T-cell (primary cell): ENCODE measurements at regions of chr7 and their contacts with region 1.

Region 1: DNA sequence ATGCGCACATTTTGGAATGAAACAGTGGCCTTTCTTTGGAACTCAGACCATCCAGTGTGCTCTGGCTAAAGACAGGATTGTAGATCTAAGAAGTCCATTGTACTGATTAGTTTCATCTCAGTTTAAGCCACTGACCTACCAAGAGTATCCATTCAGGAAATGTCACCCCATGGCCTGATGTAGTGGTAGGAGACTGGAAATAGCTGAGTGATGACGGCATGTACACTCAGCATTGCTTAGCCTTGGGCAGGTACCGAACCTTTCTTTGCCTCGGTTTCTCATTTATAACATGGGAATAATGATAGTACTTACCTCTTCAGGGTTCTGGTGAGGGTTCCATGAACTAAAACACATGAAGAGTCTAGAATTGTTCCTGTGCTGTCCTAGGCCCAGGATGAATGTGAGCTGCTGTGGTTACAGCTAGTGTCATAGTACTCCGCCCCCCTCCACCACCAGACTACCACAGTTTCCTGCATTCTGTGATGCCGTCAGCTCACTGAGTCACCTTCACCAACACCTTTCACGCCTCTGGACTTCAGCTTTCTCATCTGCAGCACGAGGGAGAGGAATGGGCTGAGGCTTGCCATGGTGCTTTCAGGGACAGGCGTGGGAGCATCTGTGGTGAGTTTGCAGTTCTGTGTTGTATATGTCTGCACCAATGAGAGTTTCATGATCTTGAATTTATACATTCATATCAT is 484.0 kb upstream of the GALNT17 start:
- DNase-seq: peak; percentile 47 to 90 (median 75)
- ATAC-seq: peak; percentile 96 to 98 (median 98)
- H3K4me3 ChIP-seq: peak overlapping the region in 1 of 2 donors; percentile 6
- H3K4me3 Mint-ChIP-seq: peak overlapping the region; percentile 35 to 69 (median 56)
- H3K27ac ChIP-seq: peak overlapping the region; percentile 67
- H3K27ac Mint-ChIP-seq: peak overlapping the region; percentile 77 to 88
- H3K4me1 ChIP-seq: peaks cover 13 to 48% of the 10 kb centered on the region in 2 experiments
- H3K4me1 Mint-ChIP-seq: peaks cover 25 to 36% (median 26%) of the 10 kb centered on the region in 3 donors
- H3K27me3 ChIP-seq: peaks cover 0 to 6% of the 10 kb centered on the region in 2 experiments
- H3K27me3 Mint-ChIP-seq: no peaks in the 10 kb centered on the region

Region 2: DNA sequence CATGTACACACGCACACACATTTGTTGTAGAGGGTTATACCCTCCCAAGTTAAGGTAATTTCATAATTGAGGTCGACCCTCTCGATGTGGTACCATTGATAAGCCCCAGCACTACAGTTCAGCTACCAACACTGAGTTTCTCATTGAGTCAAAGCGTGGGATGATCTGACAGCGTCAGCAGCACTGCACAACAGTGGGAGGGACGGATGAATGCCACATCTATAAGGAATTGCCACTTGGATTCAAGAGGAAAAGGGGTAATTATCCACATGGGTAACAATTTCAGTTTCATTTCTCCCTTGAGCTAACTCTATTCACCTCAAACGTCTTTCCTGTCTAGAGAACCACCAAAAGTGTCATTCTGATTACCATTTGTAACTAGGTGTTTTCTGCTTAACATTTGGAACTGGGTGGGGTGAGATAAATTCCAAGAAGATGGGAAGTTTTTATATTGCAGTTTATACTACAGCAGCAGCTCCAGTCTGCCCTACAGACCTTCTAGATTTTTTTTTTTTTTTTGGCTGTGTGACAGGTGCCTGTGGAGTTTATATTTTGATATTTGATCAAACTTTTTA is 706.8 kb before region 1 on chr7:
- CTCF ChIA-PET with region 1: no interaction called
- POLR2A ChIA-PET with region 1: no interaction called
- DNase-seq: no peak
- ATAC-seq: peak in 1 of 4 experiments; percentile 45
- H3K4me3 ChIP-seq: no peak overlapping the region
- H3K4me3 Mint-ChIP-seq: peak overlapping the region in 1 of 3 donors; percentile 9
- H3K27ac ChIP-seq: no peak overlapping the region
- H3K27ac Mint-ChIP-seq: no peak overlapping the region
- H3K4me1 ChIP-seq: peaks cover 0 to 14% of the 10 kb centered on the region in 2 experiments
- H3K4me1 Mint-ChIP-seq: peaks cover 2 to 14% (median 7%) of the 10 kb centered on the region in 3 donors
- H3K27me3 ChIP-seq: no peaks in the 10 kb centered on the region
- H3K27me3 Mint-ChIP-seq: no peaks in the 10 kb centered on the region

Region 3: DNA sequence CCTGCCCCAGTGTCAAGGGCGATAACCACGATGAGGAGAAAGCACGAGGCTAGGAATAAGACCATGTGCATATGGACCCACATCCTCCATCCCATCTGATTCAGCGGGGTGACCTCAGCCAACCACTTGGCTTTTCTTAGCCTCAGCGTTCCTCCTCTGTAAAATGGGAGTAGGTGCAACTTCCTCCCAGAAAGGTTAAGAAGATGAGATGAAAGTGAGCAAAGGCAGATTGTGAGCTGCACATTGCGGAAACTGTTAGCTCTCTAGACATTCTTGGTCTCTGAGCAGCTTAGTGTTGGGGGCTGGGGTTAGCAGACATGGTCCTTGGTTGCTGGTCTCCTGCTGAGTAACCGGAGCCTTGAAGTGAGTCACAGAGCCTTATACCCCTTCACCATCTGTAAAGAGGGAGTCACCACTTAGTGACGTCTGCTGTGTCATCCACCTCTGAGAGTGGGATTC is 13.3 kb before region 1 on chr7:
- CTCF ChIA-PET with region 1: no interaction called
- POLR2A ChIA-PET with region 1: no interaction called
- DNase-seq: no peak
- ATAC-seq: peak in 1 of 4 experiments; percentile 37
- H3K4me3 ChIP-seq: no peak overlapping the region
- H3K4me3 Mint-ChIP-seq: no peak overlapping the region
- H3K27ac ChIP-seq: no peak overlapping the region
- H3K27ac Mint-ChIP-seq: no peak overlapping the region
- H3K4me1 ChIP-seq: peaks cover 0 to 14% of the 10 kb centered on the region in 2 experiments
- H3K4me1 Mint-ChIP-seq: peaks cover 0 to 9% (median 8%) of the 10 kb centered on the region in 3 donors
- H3K27me3 ChIP-seq: no peaks in the 10 kb centered on the region
- H3K27me3 Mint-ChIP-seq: no peaks in the 10 kb centered on the region

Region 4: GRCh38 chr7:70693686-70694360 is 45.9 kb after region 1 on chr7:
- CTCF ChIA-PET with region 1: interaction called, 3 to 14 read pairs
- POLR2A ChIA-PET with region 1: interaction called in 1 of 2 experiments, 5 read pairs
- DNase-seq: peak; percentile 20 to 84 (median 54)
- ATAC-seq: peak; percentile 78 to 85 (median 78)
- H3K4me3 ChIP-seq: peak overlapping the region; percentile 19 to 94
- H3K4me3 Mint-ChIP-seq: peak overlapping the region; percentile 71 to 77 (median 72)
- H3K27ac ChIP-seq: peak overlapping the region; percentile 38
- H3K27ac Mint-ChIP-seq: peak overlapping the region; percentile 69 to 81
- H3K4me1 ChIP-seq: peaks cover 12 to 28% of the 10 kb centered on the region in 2 experiments
- H3K4me1 Mint-ChIP-seq: peaks cover 12 to 34% (median 33%) of the 10 kb centered on the region in 3 donors
- H3K27me3 ChIP-seq: peaks cover 0 to 19% of the 10 kb centered on the region in 2 experiments
- H3K27me3 Mint-ChIP-seq: peaks cover 14 to 36% of the 10 kb centered on the region in 2 donors

Region 5: DNA sequence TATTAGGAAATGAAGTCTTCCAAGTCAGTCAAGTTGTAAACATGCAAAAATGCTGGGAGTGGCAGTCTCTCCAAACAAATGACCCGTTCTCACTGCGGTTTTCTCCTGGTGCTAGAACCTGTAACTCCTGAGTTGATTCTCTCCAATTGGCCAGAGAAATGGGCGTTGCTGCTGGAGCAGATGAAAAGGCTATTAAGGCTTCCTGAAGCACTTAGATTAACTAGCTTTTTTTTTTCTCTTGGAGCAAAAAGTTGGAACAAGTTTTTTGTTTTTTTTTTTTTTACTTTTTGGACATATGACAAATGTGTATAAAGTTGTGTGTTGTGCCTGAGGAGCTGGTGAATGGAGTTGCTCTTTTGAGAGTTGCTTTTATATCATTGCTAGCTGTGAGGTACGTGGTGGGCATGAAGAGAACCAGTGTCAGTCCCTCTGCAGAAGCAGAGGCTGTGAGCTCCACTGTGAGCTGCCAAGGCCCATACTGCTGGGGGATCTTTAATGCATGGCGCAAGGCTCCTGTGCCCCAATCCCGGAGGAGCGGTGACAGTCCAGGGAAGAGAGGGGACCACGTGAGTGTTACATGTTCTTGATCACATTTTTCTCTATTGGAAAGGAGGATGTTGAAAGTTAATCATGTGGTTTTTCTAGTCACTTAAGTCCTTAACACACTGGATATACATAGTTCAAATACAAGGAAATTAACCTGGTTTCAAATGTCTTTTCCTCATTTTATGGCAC is 90.4 kb after region 1 on chr7:
- CTCF ChIA-PET with region 1: no interaction called
- POLR2A ChIA-PET with region 1: no interaction called
- DNase-seq: no peak
- ATAC-seq: no peak
- H3K4me3 ChIP-seq: no peak overlapping the region
- H3K4me3 Mint-ChIP-seq: no peak overlapping the region
- H3K27ac ChIP-seq: no peak overlapping the region
- H3K27ac Mint-ChIP-seq: peak overlapping the region in 1 of 2 donors; percentile 62
- H3K4me1 ChIP-seq: peaks cover 6 to 8% of the 10 kb centered on the region in 2 experiments
- H3K4me1 Mint-ChIP-seq: peaks cover 20 to 43% (median 37%) of the 10 kb centered on the region in 3 donors
- H3K27me3 ChIP-seq: no peaks in the 10 kb centered on the region
- H3K27me3 Mint-ChIP-seq: peaks cover 0 to 3% of the 10 kb centered on the region in 2 donors